Panc1 (cell line): ENCODE measurements at regions of chr11 and their contacts with region 1.

Region 1: DNA sequence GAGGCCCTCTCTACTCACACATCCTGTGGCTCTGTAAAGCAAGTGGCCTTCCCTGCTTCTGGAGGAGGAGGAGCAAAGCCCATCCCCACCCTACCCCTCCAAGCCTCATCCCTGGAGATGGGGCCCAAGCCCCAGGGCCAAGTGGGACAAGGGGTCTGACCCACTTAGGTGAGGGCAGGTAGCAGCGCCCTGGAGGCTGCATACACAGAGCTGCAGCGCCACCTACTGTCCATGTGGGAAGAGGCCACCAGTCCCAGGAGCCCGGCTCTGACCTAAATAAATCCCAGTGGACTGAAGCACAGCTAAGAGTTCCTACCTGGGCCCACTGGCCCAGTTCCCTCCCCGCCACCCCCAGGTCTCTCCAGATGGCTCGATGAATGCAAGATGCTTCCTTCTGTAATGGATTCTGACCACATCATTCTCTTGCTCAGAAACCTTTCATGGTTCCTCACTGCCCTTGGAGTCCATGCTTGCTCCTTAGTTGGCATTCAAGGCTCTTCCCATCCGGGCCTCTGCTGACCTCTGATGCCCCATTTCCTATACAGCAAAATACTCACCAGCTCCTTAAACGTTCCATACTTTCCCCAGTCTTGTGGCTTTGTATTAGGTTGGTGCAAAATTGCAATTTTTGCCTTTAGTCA is 62.1 kb downstream of the THAP12 start:
- DNase-seq: peak; percentile 71
- ATAC-seq: peak; percentile 97
- H3K4me3 ChIP-seq: no peak overlapping the region
- H3K27ac ChIP-seq: no peak overlapping the region
- H3K4me1 ChIP-seq: no peaks in the 10 kb centered on the region
- H3K27me3 ChIP-seq: peaks cover 3% of the 10 kb centered on the region; the same call in 1 of the 2 replicates
- CTCF ChIP-seq: peak; percentile 96

Region 2: DNA sequence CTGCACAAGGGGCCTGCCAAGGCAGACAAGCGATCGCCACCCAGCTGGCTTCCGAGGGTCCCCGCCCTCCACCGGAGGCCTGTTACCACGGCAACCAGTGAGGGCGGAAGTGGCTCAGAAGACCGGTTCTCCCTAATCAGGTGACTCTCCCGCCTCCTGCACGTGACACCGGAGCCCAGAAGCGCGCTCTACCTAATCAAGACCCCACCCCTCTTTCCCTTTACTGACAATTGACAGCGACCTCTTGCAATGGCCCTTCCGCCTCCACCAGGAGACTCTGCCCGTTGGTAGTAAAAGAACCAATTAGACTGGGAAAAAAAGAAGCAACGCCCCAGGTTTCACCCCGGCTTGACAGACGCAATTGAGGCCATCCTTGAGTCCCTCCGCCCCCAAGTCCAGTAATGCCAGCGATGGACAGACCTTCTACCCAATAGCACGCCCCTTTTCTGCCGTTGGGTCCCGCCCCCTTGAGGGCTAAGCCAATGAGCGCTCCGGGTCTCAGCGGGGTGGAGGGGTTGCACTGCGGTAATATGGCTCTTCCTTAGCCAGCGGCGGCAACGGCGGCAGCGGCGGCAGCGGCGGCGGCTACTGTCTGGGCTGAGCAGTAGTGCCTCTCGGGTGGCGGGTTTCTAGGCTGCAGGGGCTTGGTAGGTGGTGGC is 504.0 kb before region 1 on chr11 and contains the start of gene UVRAG:
- CTCF ChIA-PET with region 1: no interaction called
- POLR2A ChIA-PET with region 1: no interaction called
- in situ Hi-C with region 1: no loop called
- intact Hi-C with region 1: loop called (anchors 10 kb)
- DNase-seq: peak; percentile 98
- ATAC-seq: peak; percentile 95
- H3K4me3 ChIP-seq: peak within 1 kb of the TSS; percentile 77 to 91
- H3K27ac ChIP-seq: peak within 1 kb of the TSS; percentile 83
- H3K4me1 ChIP-seq: peaks cover 23% of the 10 kb centered on the region
- H3K27me3 ChIP-seq: no peaks in the 10 kb centered on the region
- CTCF ChIP-seq: no peak
- total RNA-seq, gene UVRAG: 29.5 TPM

Region 3: GRCh38 chr11:75907906-75908527 is 410.8 kb before region 1 on chr11:
- CTCF ChIA-PET with region 1: no interaction called
- POLR2A ChIA-PET with region 1: no interaction called
- in situ Hi-C with region 1: no loop called
- intact Hi-C with region 1: loop called (anchors 10 kb)
- DNase-seq: no peak
- ATAC-seq: no peak
- H3K4me3 ChIP-seq: no peak overlapping the region
- H3K27ac ChIP-seq: no peak overlapping the region
- H3K4me1 ChIP-seq: no peaks in the 10 kb centered on the region
- H3K27me3 ChIP-seq: no peaks in the 10 kb centered on the region
- CTCF ChIP-seq: no peak